ENCODE measurements at regions of chr19 and their contacts with region 1.

Region 1: DNA sequence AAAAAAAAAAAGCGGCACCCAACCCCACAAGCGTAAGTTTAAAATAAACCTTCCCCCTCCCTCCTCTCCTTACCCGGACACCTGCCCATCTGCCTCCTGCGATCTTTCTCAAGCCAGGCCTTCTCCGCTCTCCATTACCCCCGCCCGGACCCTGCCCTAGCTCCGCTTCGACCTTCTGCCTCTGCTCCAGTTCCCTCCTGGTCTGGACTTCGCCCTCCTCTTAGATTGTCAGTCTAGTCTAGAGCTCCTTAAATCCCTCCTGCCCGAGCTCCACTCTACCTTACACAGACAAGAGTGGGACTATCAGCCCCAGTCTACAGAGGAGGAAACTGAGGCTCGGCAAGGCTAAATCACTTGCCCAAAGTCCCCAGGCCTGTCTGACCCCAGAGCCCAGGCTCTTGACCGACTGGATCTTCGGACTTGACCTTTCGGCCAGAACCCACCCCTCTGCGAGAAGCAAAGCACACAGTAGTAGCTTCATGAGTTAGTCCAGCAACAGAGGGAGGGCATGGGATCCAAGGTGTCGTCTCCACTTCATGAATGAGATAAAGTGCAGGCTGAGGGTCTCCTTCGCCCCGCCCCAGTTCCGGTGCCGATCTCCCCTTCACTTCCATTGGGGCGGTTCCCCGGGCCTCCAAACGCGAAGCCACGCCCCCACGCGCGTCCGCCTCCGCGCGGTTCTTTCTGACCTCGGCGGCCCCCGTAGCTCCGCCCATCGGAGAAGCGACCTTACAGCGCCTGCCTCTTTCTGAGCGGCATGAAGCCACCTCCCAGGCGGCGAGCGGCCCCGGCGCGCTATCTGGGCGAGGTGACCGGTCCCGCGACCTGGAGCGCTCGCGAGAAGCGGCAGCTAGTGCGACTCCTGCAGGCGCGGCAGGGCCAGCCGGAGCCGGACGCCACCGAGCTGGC is at the start of gene SNAPC2:
- DNase-seq: peak; percentile 80 to 99
- H3K4me3 ChIP-seq: peak within 1 kb of the TSS; percentile 53 to 86 (median 60)
- H3K27ac ChIP-seq: no peak within 1 kb of the TSS
- H3K4me1 ChIP-seq: peaks cover 0 to 23% (median 13%) of the 10 kb centered on the region in 4 experiments; a peak in 5 of 7 replicates
- H3K27me3 ChIP-seq: peaks cover 17 to 40% (median 35%) of the 10 kb centered on the region in 4 experiments; a peak in 6 of 7 replicates
- CTCF ChIP-seq: no peak; a peak in 1 of 4 replicates
- EP300 ChIP-seq: no peak
- POLR2A ChIP-seq: peak in 1 of 2 experiments; percentile 35; a peak in 1 of 3 replicates
- RAD21 ChIP-seq: 0 out of 4 replicates have a peak, but pooled peaks of 1 of the 2 experiments have one; percentile 2
- total RNA-seq, gene SNAPC2: 20.3 and 22.9 TPM in 2 replicates

Region 2: DNA sequence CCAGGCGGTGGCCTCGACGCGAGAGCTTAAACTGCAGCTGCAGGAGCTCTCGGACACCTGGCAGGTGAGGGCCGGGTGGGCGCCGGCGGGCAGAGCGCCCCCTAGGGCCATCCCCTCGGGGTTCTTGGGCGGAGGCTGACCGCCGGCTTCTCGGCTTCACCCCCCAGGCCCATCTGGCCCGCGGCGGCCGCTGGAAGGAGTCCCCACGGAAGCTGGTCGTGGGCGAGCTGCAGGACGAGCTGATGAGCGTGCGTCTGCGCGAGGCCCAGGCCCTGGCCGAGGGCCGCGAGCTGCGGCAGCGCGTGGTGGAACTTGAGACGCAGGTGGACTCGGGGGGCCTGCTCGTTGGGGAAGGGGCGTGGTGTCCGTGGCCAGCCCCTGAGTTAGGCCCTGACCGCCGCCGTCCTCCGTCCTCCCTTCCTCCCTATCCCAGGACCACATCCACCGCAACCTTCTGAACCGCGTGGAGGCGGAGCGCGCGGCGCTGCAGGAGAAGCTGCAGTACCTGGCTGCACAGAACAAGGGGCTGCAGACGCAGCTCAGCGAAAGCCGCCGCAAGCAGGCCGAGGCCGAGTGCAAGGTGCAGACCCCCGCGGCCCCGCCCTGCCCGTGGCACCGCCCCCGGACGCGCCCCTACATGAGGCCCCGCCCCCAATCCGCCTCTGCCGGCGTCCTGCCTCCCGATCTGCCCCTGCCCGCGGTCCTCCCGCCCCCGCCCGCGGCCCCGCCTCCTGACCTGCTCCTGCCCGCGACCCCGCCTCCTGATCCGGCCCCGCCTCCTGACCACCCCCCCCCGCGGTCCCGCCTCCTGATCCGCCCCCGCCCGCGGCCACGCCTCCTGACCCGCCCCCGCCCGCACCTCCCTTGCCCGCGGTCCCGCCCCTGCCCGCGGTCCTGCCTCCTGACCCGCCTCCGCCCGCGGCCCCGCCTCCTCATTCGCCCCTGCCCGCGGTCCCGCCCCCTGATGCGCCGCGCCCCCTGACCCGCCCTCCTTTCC is 57.6 kb before region 1 on chr19:
- CTCF ChIA-PET with region 1: interaction called, 112 read pairs
- POLR2A ChIA-PET with region 1: interaction called, 106 read pairs
- DNase-seq: peak; percentile 83 to 99
- H3K4me3 ChIP-seq: peak overlapping the region; percentile 30 to 66 (median 50)
- H3K27ac ChIP-seq: no peak overlapping the region
- H3K4me1 ChIP-seq: peaks cover 4 to 33% (median 20%) of the 10 kb centered on the region in 4 experiments; a peak in 6 of 7 replicates
- H3K27me3 ChIP-seq: peaks cover 8 to 43% (median 31%) of the 10 kb centered on the region in 4 experiments
- CTCF ChIP-seq: peak; percentile 9 to 31 (median 31); a peak in 3 of 4 replicates
- EP300 ChIP-seq: no peak
- POLR2A ChIP-seq: peak in 1 of 2 experiments; percentile 45; a peak in 1 of 3 replicates
- RAD21 ChIP-seq: peak in 1 of 2 experiments; percentile 19; a peak in 1 of 4 replicates

Region 3: DNA sequence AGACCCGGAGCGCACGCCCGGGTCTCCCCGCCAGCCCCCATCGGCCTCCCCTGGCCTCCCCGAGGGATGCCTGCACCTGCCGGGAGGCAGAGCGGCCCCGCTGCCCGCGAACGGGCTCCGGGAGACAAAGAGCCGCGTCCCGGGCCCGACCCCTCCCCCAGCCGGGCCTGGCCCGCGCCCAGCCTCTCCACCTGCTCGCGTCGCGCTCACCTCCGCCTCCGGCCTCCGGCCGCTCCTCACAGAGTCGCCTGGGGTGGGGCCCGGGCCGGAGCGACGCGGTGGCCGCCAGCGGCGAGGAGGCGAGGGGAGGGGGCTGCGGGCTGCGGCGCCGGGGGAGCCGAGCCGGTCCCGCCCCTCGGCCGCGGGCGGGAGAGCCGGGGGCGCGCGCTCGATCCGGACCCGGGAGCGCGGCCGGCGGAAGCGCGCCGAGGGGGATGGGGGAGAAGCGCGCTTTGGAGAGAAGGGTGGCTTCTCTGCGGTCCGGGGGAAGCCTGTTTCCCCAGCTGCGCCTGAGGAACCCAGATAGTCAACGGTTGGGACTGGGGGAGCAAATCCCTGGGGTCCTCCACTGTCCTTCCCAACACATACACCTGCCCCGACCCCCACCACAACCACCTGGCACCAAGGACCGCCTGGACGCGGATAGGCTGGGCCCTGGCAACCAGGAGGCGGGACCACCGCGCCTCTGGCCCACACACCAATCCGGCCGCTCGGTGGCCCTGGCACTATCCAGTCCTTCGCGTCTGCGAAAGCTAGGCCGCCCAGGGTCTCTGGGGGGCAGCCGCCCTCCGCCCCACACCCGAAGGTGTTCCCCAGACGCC is 45.6 kb before region 1 on chr19 and contains the start of gene PRR36:
- CTCF ChIA-PET with region 1: interaction called, 22 read pairs
- POLR2A ChIA-PET with region 1: interaction called, 106 read pairs
- DNase-seq: peak in 1 of 2 experiments; percentile 93
- H3K4me3 ChIP-seq: peak within 1 kb of the TSS; percentile 67 to 98 (median 70)
- H3K27ac ChIP-seq: 0 out of 2 replicates have a peak within 1 kb of the TSS, but pooled peaks have one; percentile 46
- H3K4me1 ChIP-seq: peaks cover 0 to 17% (median 12%) of the 10 kb centered on the region in 4 experiments; a peak in 5 of 7 replicates
- H3K27me3 ChIP-seq: peaks cover 0 to 7% (median 5%) of the 10 kb centered on the region in 4 experiments; a peak in 3 of 7 replicates
- CTCF ChIP-seq: no peak; a peak in 1 of 4 replicates
- EP300 ChIP-seq: no peak
- POLR2A ChIP-seq: no peak
- RAD21 ChIP-seq: peak; percentile 13 to 47; a peak in 2 of 4 replicates
- total RNA-seq, gene PRR36: 23.9 and 25.3 TPM in 2 replicates

Region 4: DNA sequence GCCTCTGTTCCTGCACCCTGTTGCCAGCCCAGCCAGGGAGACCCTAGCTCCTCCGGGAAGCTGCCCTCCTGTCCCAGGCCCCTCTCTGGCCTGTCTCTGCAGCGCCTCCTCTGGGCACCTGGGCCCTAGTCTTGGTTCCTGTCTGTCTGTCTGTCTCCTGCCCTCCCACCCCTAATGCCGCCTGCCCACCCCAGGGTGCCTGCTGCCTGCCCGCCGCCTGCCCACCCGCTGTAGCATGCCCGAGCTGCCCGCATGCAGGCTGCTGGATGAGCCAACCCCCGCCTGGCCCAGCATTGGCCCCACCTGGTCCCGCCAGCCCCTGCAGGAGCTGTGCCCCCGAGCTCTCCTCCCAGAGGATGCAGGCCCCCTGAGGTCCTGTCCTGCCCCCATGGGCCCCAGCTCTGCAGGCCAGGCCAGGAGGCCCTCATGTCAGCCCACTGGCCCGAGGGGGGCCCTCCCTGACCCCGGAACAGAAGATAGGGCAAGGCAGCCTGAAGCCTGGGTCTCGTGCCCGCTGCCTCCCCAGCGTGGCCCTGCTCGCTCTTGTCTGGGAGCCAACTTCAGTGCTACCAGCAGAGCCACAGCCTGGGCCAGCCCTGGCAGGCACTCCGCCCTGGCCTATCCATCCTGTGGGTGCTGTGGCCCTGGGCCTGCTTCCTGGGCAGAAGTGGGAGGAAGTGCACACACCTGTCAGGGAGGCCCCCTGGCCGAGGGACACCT is 11.0 kb before region 1 on chr19:
- CTCF ChIA-PET with region 1: interaction called, 12 read pairs
- POLR2A ChIA-PET with region 1: interaction called, 22 read pairs
- DNase-seq: no peak
- H3K4me3 ChIP-seq: no peak overlapping the region
- H3K27ac ChIP-seq: no peak overlapping the region
- H3K4me1 ChIP-seq: peaks cover 0 to 5% (median 4%) of the 10 kb centered on the region in 4 experiments; a peak in 5 of 7 replicates
- H3K27me3 ChIP-seq: peaks cover 0 to 1% (median 0%) of the 10 kb centered on the region in 4 experiments; a peak in 1 of 7 replicates
- CTCF ChIP-seq: peak; percentile 30 to 44 (median 32)
- EP300 ChIP-seq: no peak
- POLR2A ChIP-seq: no peak
- RAD21 ChIP-seq: 0 out of 4 replicates have a peak, but pooled peaks of 1 of the 2 experiments have one; percentile 12

Region 5: GRCh38 chr19:7959211-7959610 is 39.3 kb after region 1 on chr19:
- CTCF ChIA-PET with region 1: no interaction called
- POLR2A ChIA-PET with region 1: no interaction called
- DNase-seq: no peak
- H3K4me3 ChIP-seq: no peak overlapping the region
- H3K27ac ChIP-seq: no peak overlapping the region
- H3K4me1 ChIP-seq: no peaks in the 10 kb centered on the region
- H3K27me3 ChIP-seq: no peaks in the 10 kb centered on the region; a peak in 1 of 7 replicates
- CTCF ChIP-seq: no peak
- EP300 ChIP-seq: no peak
- POLR2A ChIP-seq: no peak
- RAD21 ChIP-seq: no peak

Measured in H1 (cell line).